ENCODE measurements at regions of chr22 and their contacts with region 1.

Region 1: DNA sequence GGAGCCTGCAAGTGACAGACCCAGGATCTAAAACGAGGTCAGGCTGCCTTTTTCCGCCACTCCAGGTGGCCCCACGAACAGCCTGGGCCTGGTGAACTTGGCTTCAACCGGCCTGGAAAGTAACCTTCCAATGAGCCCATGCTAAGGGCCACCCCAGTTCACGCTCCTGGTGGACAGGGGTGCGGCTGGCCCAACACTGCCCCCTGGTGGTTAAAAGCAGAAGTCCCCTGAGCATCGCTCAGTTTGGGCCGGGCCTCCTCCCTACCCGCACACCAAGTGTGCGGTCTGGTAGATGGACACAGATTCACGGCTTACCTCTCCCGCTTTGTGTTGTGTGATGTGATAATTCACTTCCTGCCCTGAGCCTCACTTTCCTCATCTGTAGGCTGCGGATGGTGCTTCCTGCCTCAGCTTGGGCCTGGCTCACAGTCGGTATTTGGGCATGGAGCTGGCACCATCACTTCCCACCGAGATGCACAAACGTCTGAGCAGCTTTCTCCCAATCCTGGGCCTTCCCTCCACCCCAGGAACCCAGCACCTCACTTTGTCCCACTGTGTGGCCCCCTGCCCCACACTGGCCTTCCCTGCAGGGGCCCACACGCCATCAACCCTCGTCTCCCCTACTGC is 13.7 kb upstream of the SEC14L3 start:
- DNase-seq: peak; percentile 81
- ATAC-seq: peak; percentile 100
- H3K4me3 Mint-ChIP-seq: no peak overlapping the region
- H3K27ac Mint-ChIP-seq: peak overlapping the region; percentile 18
- H3K4me1 Mint-ChIP-seq: peaks cover 3% of the 10 kb centered on the region
- H3K27me3 Mint-ChIP-seq: peaks cover 3% of the 10 kb centered on the region

Region 2: GRCh38 chr22:30326706-30327362 is 158.6 kb before region 1 on chr22 and contains the start of gene TBC1D10A:
- CTCF ChIA-PET with region 1: no interaction called
- DNase-seq: peak; percentile 95
- ATAC-seq: peak; percentile 90
- H3K4me3 Mint-ChIP-seq: peak within 1 kb of the TSS; percentile 88
- H3K27ac Mint-ChIP-seq: peak within 1 kb of the TSS; percentile 80
- H3K4me1 Mint-ChIP-seq: peaks cover 42% of the 10 kb centered on the region
- H3K27me3 Mint-ChIP-seq: no peaks in the 10 kb centered on the region
- total RNA-seq, gene TBC1D10A: 32.2 to 48.1 TPM

Region 3: DNA sequence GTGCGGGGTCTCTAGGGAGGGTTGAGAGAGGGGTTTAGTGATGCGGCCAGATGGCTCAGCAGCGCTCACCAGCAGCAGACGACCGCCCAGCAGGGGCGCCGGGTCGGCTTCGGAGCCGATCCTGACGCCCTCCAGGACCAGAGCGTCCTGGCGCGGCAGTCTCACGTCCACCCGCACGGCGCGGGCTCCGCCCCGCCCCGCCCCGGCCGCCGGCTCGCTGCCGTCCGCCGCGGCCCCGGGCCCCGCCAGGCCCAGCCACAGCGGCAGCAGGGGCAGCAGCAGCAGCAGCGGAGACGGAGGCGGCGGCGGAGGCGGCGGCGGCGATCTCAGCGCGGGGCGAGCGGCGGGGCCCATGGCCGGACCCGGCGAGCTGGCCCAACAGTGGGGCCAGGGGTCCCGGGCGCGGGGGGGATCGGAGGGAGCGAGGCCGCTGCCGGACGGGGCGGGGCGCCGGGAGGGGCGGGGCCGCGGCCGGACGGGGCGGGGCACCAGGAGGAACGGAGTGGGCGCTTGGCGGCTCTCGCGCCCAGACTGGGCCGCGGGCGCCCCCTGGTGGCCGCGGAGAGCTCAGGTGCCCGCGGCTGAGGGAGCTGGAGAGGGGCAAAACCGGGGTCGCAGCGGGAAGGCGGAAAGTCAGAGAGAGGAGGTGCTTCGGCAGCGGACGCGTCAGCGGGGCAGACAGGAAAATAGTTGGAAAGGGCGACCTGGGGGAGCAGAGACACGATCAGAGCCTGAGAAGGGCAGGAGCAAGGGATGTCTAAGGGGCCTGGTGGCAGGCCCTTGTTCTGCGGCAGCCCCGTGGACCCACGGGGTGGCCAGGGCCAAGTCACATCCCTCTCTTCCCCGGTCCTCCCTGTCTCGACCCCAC is 98.3 kb before region 1 on chr22 and contains the start of gene RNF215:
- CTCF ChIA-PET with region 1: interaction called, 81 read pairs
- DNase-seq: peak; percentile 82
- ATAC-seq: peak; percentile 91
- H3K4me3 Mint-ChIP-seq: peak within 1 kb of the TSS; percentile 76
- H3K27ac Mint-ChIP-seq: peak within 1 kb of the TSS; percentile 78
- H3K4me1 Mint-ChIP-seq: peaks cover 22% of the 10 kb centered on the region
- H3K27me3 Mint-ChIP-seq: no peaks in the 10 kb centered on the region
- total RNA-seq, gene RNF215: 8.5 to 10.5 TPM

Region 4: DNA sequence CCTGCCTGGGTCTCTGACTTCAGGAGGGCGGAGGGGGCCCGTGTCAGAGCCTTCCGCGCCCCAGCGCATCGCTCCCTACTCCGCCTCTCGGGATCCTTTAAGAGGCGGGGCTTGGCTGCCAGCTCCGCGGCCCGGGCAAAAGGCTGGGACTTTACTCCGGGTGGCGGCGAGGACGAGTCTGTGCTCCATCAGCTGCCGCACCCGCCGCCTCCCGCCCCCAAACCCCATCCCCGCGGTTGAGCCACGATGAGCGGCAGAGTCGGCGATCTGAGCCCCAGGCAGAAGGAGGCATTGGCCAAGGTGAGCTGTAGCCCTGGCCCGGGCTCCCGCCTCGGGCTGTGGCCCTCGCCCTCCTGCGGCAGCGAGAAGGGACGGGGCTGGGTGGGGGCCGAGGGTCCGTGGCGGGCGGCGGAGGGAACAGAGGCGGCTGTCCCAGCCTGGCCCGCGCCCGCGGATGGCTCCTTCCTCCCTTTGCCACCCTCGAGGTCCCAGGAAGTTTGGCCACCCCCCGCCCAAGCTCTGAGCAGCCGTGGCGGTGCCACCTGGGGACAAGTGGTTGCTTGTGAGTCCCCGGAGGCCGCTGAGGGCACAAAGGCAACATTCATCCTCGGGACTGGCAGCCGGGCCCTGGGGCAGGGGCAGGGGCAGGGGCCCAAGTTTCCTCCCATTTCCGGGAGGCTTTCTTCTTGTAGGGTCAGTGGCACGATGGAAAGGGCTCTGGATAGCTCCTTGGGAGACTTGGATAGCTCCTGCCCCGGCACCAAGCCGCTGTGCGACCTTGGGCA is 88.4 kb before region 1 on chr22 and contains the start of gene SEC14L2:
- CTCF ChIA-PET with region 1: interaction called, 81 read pairs
- DNase-seq: peak; percentile 55
- ATAC-seq: peak; percentile 81
- H3K4me3 Mint-ChIP-seq: peak within 1 kb of the TSS; percentile 73
- H3K27ac Mint-ChIP-seq: no peak within 1 kb of the TSS
- H3K4me1 Mint-ChIP-seq: peaks cover 32% of the 10 kb centered on the region
- H3K27me3 Mint-ChIP-seq: peaks cover 27% of the 10 kb centered on the region
- total RNA-seq, gene SEC14L2: 2.2 to 4.8 TPM

Region 5: DNA sequence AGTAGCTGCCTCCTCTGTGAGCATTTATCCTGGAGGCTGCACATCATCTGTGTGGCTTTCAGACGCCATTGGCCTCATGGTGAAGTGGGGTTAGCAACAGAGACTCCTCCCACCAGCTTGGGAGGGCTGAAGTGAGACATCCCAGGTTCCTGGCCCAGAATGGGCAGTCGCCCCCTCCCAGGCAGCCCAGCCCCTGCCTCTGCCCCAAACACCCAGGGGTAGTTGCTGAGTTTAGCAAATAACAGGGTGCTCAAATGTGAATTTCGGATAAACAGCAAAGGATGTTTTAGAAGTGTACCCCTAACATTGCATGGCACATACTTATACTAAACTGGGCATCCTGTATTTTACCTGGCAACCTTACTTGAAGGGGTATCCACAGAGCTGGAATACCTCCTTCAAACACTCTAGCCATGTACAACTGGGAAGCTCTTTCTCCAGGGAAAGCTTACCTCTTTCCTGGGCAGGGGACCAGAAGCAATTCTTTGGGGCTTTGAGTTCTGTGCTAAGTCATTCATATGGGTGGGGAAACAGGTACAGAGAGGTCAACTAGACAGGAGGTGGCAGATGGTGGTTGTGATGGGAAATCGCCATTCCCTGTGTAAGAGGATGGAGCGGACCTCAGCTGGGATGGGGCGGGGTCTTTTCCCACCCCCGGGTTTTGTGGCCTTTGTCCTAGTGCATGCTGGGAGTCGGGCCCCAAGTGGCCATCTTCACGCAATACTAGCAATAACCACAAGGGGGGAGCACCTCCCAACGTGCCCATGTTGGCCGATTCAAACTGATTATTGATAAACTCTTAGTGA is 40.6 kb before region 1 on chr22:
- CTCF ChIA-PET with region 1: interaction called, 52 read pairs
- DNase-seq: peak; percentile 78
- ATAC-seq: peak; percentile 54
- H3K4me3 Mint-ChIP-seq: no peak overlapping the region
- H3K27ac Mint-ChIP-seq: peak overlapping the region; percentile 31
- H3K4me1 Mint-ChIP-seq: peaks cover 32% of the 10 kb centered on the region
- H3K27me3 Mint-ChIP-seq: peaks cover 43% of the 10 kb centered on the region

Region 6: DNA sequence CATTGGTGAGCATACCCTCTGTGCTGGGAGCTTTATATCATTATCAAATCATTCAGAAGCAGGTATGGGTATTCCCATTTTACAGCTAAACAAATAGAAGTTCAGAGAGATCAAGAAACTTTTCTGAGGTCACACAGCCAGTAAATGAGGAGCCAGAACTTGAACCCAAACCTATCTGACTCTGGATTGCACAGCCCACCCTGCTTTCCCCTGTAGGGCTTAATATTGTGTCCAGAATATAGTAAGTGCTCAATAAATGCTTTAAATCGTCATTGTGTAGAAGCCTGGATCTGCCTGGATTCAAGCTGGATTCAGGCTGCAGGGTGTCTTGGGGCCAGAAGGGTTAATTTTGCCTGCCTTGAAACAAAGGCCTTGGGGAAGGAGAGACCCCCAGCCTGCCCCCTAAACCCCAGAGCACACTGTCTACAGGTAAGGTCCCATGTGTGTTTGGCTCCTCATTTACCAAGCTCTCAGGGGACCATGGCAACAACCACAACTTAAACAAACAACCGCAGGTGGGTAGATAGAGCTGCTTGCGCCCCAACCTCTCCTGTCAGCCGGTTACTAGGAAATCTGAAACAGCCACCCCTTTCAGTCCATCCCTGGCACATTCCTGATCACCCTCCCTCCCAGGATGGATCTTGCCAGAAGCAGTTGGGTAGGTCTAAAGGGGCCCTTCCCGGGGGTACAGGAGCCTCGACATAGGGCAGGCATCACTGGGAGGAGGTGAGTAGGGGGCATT is 10.6 kb before region 1 on chr22:
- CTCF ChIA-PET with region 1: interaction called, 11 read pairs
- DNase-seq: peak; percentile 50
- ATAC-seq: peak; percentile 60
- H3K4me3 Mint-ChIP-seq: no peak overlapping the region
- H3K27ac Mint-ChIP-seq: no peak overlapping the region
- H3K4me1 Mint-ChIP-seq: peaks cover 17% of the 10 kb centered on the region
- H3K27me3 Mint-ChIP-seq: peaks cover 22% of the 10 kb centered on the region

Region 7: DNA sequence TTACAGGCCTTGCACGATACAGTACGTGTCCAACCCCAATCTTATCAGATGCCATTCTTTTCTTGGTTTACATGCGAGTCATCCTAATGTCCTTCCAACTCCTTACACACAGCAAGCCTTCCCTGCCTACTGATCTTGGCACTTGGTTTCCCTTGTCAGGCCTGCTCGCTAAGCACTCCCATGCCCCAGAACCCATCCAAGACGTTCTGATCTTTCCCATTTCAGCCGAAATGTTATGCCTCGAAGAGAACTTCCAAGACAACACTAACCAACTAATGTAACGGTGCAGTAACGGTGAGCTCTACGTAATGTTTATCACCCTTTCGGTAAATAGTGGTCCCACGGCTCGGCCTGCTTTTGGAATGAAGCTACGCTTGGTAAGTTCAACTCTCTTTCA is 105.7 kb after region 1 on chr22:
- CTCF ChIA-PET with region 1: no interaction called
- DNase-seq: no peak
- ATAC-seq: peak; percentile 1
- H3K4me3 Mint-ChIP-seq: no peak overlapping the region
- H3K27ac Mint-ChIP-seq: no peak overlapping the region
- H3K4me1 Mint-ChIP-seq: peaks cover 1% of the 10 kb centered on the region
- H3K27me3 Mint-ChIP-seq: peaks cover 13% of the 10 kb centered on the region

Measured in activated CD8-positive, alpha-beta memory T cell treated with anti-CD3 and anti-CD28 coated beads, Interleukin-2, amount 10 ng/mL, durations not matched to agents 7 days and 5 days (primary cell).